Psoas muscle (tissue), 8 donors: ENCODE measurements at regions of chr2 and their contacts with region 1.

Region 1: DNA sequence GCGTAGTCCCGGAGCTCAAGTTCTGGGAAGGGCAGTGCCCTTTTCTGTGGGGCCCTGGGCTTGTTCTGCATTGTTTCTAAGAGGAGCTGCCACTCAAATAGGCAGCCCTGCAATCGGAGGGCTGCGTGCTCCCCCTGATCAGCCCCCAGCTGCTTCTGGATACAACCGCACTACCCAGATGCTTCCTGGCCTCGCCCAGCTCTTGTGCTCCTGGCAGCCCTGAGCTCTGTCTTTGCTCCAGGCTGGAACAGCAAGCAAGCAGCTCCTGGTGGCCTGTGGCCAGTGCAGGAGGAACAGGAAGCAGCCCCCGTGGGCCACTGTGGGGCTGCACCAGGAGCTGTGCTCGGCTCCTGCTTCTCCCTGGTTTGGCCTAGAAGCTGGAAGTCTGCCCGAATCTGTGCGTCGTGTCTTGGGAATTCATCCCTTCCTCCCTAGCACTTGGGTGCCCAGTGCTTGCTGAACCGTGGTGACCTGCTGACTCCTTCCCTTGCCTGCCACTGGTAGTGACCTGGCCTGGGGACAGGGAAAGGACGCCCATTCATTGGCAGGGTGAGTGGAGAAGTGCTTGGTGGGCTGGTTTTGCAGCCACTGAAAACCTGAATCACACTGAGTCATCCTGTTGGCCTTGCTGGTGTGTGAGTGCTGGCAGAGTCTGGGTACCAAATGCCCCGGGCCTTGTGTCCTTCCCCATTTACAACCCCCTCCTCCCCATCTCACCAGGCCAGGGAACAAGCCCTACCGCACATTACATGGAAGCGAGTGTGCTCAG is 27.3 kb upstream of the NTSR2 start:
- DNase-seq: peak; percentile 80 to 95
- ATAC-seq: peak; percentile 71 to 77 (median 75)
- H3K4me3 ChIP-seq: peak overlapping the region; percentile 38
- H3K27ac ChIP-seq: peak overlapping the region; percentile 91
- H3K4me1 ChIP-seq: peaks cover 34% of the 10 kb centered on the region
- H3K27me3 ChIP-seq: no peaks in the 10 kb centered on the region
- CTCF ChIP-seq: no peak

Region 2: DNA sequence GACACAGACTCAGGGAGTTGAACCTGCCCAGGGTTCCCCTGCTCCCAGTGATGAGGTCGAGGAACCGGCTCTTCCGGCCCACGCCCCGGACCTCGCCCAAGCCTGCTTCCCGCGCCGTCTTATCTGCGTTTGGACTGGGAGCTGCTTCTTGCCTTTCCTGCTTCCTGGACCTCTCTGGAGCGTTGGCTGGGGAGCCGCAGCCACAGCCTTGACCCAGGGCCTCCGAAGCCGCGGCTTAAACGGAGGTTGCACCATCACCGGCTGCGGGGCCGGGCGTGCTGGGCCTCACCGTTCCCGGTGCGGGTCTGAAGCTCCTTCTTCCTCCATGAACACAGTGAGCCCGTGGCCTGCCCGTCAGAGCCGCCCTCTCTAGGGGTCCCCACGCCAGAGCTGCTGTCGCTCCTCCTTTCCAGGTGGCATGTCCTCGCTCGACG is 40.6 kb before region 1 on chr2:
- intact Hi-C with region 1: no loop called
- DNase-seq: no peak
- ATAC-seq: no peak
- H3K4me3 ChIP-seq: no peak overlapping the region
- H3K27ac ChIP-seq: no peak overlapping the region
- H3K4me1 ChIP-seq: peaks cover 11% of the 10 kb centered on the region
- H3K27me3 ChIP-seq: no peaks in the 10 kb centered on the region
- CTCF ChIP-seq: no peak

Region 3: DNA sequence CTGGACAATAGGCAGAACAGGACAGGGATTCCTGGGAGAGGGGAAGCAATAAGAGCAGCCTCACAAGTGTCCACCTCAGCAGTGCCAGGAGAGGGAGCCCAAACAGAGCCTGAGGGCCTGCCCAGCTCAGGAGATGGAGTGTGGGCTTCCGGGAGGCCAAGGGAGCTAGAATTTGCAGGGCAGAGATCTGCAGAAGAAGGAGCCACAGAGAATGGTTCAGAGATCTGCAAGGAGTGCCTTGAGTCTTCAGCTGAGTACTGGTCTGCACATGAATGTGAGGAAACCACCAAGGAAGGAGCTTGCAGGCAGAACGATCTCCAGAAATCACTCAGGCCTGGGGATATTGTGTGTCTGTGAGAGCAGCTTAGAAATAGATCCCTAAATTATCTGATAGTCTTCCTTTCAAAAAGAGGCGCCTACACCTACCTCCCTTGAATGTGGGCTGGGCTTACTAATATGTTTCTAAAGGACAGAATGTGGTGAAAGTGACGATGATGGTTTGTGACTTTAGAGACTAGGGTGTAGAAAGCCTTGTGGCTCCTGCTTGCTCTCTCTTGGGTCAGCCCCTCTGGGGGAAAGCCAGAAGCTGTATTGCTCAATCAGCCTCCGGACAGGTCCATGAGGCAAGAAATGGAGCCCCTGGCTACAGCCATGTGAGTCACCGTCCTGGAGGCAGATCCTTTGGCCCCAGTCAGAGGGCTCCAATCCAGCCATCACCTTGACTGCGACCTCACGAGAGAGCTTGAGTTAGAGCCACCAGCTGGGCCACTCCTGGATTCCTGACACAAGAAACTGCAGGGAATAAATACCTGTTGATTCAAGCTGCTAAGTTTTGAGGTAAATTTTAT is 41.5 kb after region 1 on chr2:
- intact Hi-C with region 1: loop called (anchors 2 to 5 kb)
- DNase-seq: peak; percentile 92 to 95
- ATAC-seq: peak; percentile 89 to 94 (median 90)
- H3K4me3 ChIP-seq: no peak overlapping the region
- H3K27ac ChIP-seq: peak overlapping the region; percentile 73
- H3K4me1 ChIP-seq: peaks cover 19% of the 10 kb centered on the region
- H3K27me3 ChIP-seq: no peaks in the 10 kb centered on the region
- CTCF ChIP-seq: peak; percentile 39

Region 4: DNA sequence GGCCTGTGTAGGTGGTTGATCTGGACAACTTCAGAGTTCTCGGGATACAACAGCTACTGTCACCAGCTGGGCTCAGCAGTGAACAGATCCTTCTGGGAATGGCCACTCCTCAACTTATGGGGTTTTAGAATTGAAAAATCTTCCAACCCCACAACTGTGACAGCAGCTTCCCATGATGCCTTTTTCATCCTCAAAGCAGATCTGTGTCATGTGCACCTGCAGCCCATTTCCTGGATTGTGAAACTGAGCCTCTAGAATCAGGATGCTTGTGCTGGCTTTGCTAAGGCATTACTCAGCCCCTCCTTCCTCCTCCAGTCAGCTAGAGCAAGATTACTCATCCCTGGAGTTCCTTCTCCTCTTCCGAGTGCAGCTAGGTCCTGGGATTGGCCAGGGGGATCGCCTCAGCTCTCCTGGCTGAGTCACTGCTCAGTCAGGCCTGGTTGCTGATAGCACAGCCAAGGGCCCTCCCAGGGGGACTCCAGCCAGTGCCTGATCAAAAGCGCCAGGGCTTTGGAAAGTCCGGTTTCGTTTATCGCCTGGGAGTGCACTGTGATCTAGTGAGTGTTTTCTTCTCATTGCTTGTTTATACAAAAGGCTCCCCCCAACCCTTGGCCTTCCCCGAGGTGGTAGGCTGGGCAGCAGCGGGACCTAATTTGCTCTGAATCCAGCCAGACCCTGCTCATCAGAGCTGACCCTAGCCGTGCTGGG is 46.7 kb after region 1 on chr2:
- intact Hi-C with region 1: loop called (anchors 2 to 5 kb)
- DNase-seq: peak; percentile 96 to 98
- ATAC-seq: peak; percentile 86 to 90 (median 88)
- H3K4me3 ChIP-seq: peak overlapping the region; percentile 54
- H3K27ac ChIP-seq: peak overlapping the region; percentile 92
- H3K4me1 ChIP-seq: peaks cover 47% of the 10 kb centered on the region
- H3K27me3 ChIP-seq: no peaks in the 10 kb centered on the region
- CTCF ChIP-seq: no peak